Right cardiac atrium (tissue), 5 donors: ENCODE measurements at regions of chr12 and their contacts with region 1.

Region 1: DNA sequence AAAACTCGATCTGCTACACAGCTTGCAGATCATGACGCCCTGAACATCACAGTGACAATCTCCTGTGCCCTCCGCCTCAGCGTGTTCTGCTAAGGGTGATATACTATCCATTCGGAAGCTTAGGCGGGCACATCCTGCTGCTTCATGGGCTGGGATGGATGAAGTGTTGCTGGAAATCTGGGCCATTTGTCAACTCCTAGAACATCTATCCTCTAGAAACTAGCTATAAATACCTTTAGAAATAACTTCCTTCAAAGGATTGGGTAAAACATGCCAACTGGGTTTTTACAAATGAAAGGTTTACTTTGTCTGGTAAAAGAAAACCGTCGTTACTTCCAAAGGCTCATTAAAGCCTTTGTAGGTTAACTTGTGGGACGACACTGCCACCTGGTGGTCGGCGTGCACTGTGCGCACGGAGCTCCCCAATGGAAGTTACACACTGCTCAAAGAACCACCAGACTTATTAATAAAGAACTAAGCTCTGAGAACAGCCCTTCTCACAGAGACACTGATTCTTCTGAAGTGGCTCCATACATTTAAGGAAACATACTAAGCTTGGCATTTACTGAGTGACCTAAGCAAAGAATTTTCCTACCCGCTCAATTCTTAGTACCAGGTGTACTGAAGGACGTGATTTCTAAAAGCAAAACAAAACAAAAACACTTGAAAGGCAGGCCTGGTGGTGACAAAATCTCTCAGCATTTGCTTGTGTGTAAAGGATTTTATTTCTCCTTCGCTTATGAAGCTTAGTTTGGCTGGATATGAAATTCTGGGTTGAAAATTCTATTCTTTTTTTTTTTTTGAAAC is 21.6 kb upstream of the CACNA2D4 start:
- DNase-seq: peak; percentile 83 to 95 (median 95)
- ATAC-seq: peak; percentile 88 to 89
- H3K4me3 ChIP-seq: no peak overlapping the region
- H3K27ac ChIP-seq: no peak overlapping the region
- H3K4me1 ChIP-seq: no peaks in the 10 kb centered on the region
- H3K27me3 ChIP-seq: no peaks in the 10 kb centered on the region

Region 2: DNA sequence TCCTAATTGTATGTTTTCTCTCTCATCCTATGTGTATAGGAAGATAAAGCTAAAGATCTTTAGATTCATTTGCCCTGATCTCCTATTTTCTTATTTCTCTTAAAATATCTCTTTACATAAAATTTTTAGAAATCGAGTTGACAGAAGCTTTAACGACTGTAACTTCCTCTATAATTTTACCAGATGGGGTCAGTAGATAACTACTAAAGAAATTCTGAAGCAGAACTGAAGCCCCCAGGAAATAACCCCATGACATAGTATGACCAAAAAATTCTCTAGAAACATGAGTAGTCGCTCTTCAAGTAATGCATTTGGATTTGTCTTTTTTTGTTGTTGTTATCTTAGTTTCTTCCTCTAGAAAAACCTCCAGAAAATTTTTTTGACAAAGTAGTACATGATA is 661.0 kb before region 1 on chr12:
- intact Hi-C with region 1: no loop called
- DNase-seq: no peak
- ATAC-seq: no peak
- H3K4me3 ChIP-seq: no peak overlapping the region
- H3K27ac ChIP-seq: no peak overlapping the region
- H3K4me1 ChIP-seq: peaks cover 2% of the 10 kb centered on the region
- H3K27me3 ChIP-seq: no peaks in the 10 kb centered on the region

Region 3: GRCh38 chr12:1650260-1650977 is 289.6 kb before region 1 on chr12:
- intact Hi-C with region 1: loop called (anchors 2 to 5 kb)
- DNase-seq: peak in 1 of 3 donors; percentile 73
- ATAC-seq: peak; percentile 50 to 88
- H3K4me3 ChIP-seq: no peak overlapping the region
- H3K27ac ChIP-seq: peak overlapping the region; percentile 28
- H3K4me1 ChIP-seq: peaks cover 4% of the 10 kb centered on the region
- H3K27me3 ChIP-seq: no peaks in the 10 kb centered on the region

Region 4: DNA sequence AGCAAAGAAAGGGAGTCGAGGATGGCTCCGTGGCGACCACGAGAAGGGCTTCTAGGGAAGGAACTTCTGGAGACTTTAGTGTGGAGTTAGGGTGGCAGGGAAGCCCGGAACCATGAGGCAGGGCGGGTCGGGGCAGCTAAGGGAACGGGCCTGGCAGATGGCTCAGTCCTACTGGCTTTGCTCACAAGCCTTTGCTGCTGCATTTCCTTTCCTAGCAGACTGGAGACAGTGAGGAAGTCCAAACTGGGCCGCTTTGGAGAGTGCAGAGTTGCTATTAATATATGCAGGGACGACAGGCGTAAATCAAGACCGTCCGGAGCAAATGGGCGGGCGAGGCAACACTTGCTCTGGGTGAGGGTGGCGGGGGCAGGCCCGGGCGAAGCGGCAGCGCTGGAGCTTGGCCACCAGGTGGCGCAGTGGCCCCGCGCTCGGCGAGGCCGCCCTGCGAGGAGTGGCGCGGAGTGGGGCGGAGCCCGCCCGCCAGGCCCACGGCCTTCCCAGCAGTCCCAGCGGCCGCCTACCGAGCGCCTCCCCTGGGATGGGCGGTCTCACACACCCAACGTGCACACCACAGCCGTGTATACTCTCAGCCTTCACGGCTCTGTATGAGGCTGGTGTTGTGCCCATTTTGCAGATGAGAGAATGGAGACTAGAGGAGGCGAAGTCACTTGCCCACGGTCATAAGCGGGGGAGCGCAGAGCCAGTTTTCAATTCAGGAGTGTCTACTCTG is 144.1 kb before region 1 on chr12:
- intact Hi-C with region 1: loop called in 3 of 4 experiments (anchors 1 to 2 kb)
- DNase-seq: peak; percentile 95 to 98 (median 98)
- ATAC-seq: peak; percentile 95 to 96
- H3K4me3 ChIP-seq: peak overlapping the region; percentile 33
- H3K27ac ChIP-seq: peak overlapping the region; percentile 3
- H3K4me1 ChIP-seq: no peaks in the 10 kb centered on the region
- H3K27me3 ChIP-seq: no peaks in the 10 kb centered on the region

Region 5: DNA sequence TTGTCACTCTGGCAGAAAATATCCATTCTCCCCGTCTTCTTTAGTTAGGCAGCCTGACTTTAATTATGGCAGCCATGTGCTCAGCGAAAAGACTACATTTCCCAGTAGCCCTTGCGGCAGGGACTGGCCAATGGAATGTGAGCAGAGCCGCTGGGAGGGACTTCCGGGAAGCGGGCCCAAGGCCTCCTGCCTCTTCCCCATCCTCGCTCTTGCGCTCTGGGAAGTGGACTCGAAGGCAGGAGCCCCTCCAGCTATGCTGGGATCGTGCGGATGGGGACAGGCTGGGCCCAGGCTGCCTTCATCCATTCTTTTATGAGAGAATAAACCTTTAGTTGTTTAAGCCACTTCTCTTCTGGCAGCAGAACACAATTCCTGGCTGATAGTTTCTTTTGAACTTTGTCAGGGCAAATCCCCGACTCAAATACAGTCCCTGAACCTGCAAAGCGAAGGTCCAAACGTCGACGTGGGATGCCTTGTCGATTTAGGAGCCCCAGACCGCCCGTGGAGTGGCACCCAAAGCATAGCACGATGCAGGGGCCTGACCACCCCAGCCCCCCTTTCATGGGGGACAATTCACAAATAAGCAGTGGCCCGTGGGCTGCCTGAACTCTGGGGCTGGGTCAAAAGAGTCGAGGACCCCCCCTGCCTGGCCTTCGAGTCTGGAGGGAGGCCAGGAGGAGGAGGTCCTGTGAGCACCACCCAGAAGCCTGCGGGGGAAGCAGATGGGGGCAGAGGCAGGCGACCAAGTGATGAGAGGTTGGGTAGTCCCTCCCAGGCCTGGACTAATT is 135.3 kb before region 1 on chr12:
- intact Hi-C with region 1: loop called in 1 of 4 experiments (anchors 5 kb)
- DNase-seq: peak; percentile 92 to 96 (median 94)
- ATAC-seq: peak; percentile 85 to 91
- H3K4me3 ChIP-seq: no peak overlapping the region
- H3K27ac ChIP-seq: peak overlapping the region; percentile 2
- H3K4me1 ChIP-seq: no peaks in the 10 kb centered on the region
- H3K27me3 ChIP-seq: no peaks in the 10 kb centered on the region

Region 6: DNA sequence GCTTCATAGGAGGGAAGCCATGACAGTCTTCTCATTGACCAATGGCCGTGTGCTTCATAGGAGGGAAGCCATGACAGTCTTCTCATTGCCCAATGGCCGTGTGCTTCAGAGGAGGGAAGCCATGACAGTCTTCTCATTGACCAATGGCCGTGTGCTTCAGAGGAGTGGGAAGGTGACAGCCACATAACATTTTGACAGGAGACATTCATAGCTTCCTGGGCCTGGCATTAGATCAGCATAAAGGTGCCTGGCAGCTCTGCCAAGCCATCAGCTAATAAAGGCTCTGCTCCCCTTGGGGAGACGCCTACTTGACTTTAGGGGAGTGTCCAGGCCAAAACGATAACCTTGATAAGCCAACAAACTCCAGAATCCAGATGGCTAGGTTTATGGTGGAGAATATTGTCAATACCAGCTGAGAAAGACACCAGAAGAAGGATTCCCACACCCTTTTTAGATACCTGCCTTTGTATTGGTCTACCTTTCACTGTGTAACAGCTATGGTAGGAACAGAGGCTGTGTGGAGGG is 580.8 kb after region 1 on chr12:
- intact Hi-C with region 1: no loop called
- DNase-seq: no peak
- ATAC-seq: no peak
- H3K4me3 ChIP-seq: no peak overlapping the region
- H3K27ac ChIP-seq: no peak overlapping the region
- H3K4me1 ChIP-seq: peaks cover 7% of the 10 kb centered on the region
- H3K27me3 ChIP-seq: no peaks in the 10 kb centered on the region